Activated naive CD4-positive, alpha-beta T cell treated with anti-CD3 and anti-CD28 coated beads for 36 hours (primary cell): ENCODE measurements at regions of chr5 and their contacts with region 1.

Region 1: GRCh38 chr5:56669483-56670117 is 145.7 kb upstream of the MAP3K1 start:
- DNase-seq: no peak
- H3K4me3 Mint-ChIP-seq: no peak overlapping the region
- H3K27ac Mint-ChIP-seq: no peak overlapping the region
- H3K4me1 Mint-ChIP-seq: peaks cover 27% of the 10 kb centered on the region
- H3K27me3 Mint-ChIP-seq: no peaks in the 10 kb centered on the region

Region 2: DNA sequence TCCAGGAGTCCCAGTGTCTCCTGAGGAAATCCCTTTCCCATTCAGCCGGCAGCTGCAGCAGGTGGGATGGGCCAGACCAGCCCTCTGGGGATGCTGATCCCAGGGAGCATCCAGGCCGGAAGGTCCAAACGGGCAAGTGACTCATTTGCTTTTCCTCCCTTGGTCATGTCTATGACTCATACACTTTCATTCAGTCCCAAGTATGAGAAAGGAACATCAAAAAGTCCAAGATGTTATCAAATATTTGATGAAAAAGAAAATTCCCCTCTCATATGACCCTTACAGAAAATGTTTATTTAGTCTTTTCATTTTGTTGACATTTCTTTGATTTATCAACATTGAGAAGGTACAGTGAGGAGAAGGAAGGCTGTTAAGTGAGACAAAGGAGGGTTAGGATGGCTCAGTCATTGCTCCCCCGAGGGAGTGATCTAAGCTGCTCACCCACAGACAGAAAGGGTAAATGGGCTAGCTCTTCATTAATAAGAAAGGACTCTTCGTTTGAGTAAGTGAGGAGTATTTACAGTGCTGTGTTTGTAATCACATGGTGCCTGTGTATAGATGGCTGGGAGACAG is 318.9 kb before region 1 on chr5:
- CTCF ChIA-PET with region 1: no interaction called
- intact Hi-C with region 1: loop called (anchors 5 kb)
- DNase-seq: no peak
- H3K4me3 Mint-ChIP-seq: no peak overlapping the region
- H3K27ac Mint-ChIP-seq: no peak overlapping the region
- H3K4me1 Mint-ChIP-seq: peaks cover 38% of the 10 kb centered on the region
- H3K27me3 Mint-ChIP-seq: no peaks in the 10 kb centered on the region

Region 3: GRCh38 chr5:56737002-56737621 is 67.5 kb after region 1 on chr5:
- CTCF ChIA-PET with region 1: no interaction called
- intact Hi-C with region 1: no loop called
- DNase-seq: peak; percentile 32
- H3K4me3 Mint-ChIP-seq: no peak overlapping the region
- H3K27ac Mint-ChIP-seq: peak overlapping the region; percentile 9
- H3K4me1 Mint-ChIP-seq: peaks cover 35% of the 10 kb centered on the region
- H3K27me3 Mint-ChIP-seq: no peaks in the 10 kb centered on the region